ENCODE measurements at regions of chr1 and their contacts with region 1.

Region 1: GRCh38 chr1:240312872-240313271 is 221.2 kb downstream of the FMN2 start:
- DNase-seq: no peak
- H3K4me3 ChIP-seq: no peak overlapping the region
- H3K27ac ChIP-seq: no peak overlapping the region
- H3K4me1 ChIP-seq: peaks cover 0 to 9% (median 4%) of the 10 kb centered on the region in 4 donors
- H3K27me3 ChIP-seq: no peaks in the 10 kb centered on the region
- CTCF ChIP-seq: no peak
- EP300 ChIP-seq: no peak
- POLR2A ChIP-seq: no peak

Region 2: GRCh38 chr1:240020871-240021270 is 292.0 kb before region 1 on chr1:
- in situ Hi-C with region 1: no loop called
- intact Hi-C with region 1: no loop called
- DNase-seq: no peak
- H3K4me3 ChIP-seq: no peak overlapping the region
- H3K27ac ChIP-seq: no peak overlapping the region
- H3K4me1 ChIP-seq: no peaks in the 10 kb centered on the region
- H3K27me3 ChIP-seq: no peaks in the 10 kb centered on the region
- CTCF ChIP-seq: no peak
- EP300 ChIP-seq: no peak
- POLR2A ChIP-seq: no peak

Region 3: DNA sequence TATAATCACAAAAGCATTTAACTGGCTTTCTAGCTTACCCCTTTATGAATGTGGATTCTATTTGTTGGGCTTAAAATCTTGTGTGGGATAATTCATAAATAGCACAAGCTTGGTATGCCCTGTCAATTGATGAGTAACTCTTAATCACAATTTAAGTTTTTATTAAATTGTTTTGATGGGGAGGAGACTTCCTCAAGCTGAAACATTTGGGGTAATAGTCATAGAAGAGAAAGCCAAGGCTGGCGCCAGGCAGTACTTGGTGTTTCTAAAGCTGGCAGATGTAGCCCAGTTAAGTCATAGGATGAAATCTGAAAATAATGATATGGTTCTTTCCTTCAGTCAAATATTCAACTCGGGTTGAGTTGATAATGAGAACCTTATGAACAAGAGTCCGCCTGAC is 54.0 kb before region 1 on chr1:
- in situ Hi-C with region 1: no loop called
- intact Hi-C with region 1: loop called (anchors 5 kb)
- DNase-seq: no peak
- H3K4me3 ChIP-seq: no peak overlapping the region
- H3K27ac ChIP-seq: no peak overlapping the region
- H3K4me1 ChIP-seq: no peaks in the 10 kb centered on the region
- H3K27me3 ChIP-seq: no peaks in the 10 kb centered on the region
- CTCF ChIP-seq: no peak
- EP300 ChIP-seq: no peak
- POLR2A ChIP-seq: no peak